Mammary epithelial cell (primary cell): ENCODE measurements at regions of chr4 and their contacts with region 1.

Region 1: GRCh38 chr4:107719922-107720722 is at the start of gene PAPSS1:
- DNase-seq: peak; percentile 98
- H3K4me3 ChIP-seq: peak within 1 kb of the TSS; percentile 70 to 96 (median 73)
- H3K27ac ChIP-seq: peak within 1 kb of the TSS; percentile 73
- H3K4me1 ChIP-seq: peaks cover 11% of the 10 kb centered on the region
- H3K27me3 ChIP-seq: no peaks in the 10 kb centered on the region
- CTCF ChIP-seq: no peak
- total RNA-seq, gene PAPSS1: 68.5 to 94.7 TPM

Region 2: DNA sequence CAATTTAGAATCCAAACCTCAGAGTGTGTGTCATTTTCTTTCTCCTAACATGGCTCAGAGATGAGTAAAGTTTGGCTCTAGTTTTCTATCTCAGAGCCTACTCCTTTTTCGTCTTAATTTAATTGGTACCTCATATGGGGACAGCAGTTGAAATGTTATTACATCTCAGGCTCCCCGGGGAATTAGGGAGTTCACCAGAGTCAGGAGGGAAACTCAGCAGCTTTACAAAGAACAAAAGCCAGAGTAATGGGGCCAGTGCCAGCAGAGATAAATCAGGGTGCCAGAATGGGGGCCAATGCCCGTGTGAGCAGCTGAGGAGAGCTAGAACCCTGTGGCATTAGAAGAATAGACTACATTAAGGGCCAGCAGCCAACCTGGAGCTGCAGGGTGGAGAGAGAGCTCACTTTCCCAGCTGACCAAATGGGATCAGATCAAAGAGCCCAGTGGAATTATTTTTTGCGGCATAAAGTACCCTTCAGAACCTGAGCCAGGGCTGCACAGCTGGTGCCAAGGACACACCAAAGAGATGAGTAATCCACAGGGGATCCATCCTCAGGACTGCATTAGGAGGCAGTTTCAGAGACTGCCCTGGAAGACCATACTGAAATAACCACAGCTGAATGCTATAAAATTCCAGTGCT is 476.9 kb before region 1 on chr4:
- CTCF ChIA-PET with region 1: no interaction called
- dilution Hi-C with region 1: no loop called
- in situ Hi-C with region 1: no loop called
- intact Hi-C with region 1: loop called (anchors 10 kb)
- DNase-seq: no peak
- H3K4me3 ChIP-seq: no peak overlapping the region
- H3K27ac ChIP-seq: no peak overlapping the region
- H3K4me1 ChIP-seq: no peaks in the 10 kb centered on the region
- H3K27me3 ChIP-seq: peaks cover 14% of the 10 kb centered on the region
- CTCF ChIP-seq: no peak

Region 3: GRCh38 chr4:107349266-107349665 is 370.9 kb before region 1 on chr4:
- CTCF ChIA-PET with region 1: no interaction called
- dilution Hi-C with region 1: no loop called
- in situ Hi-C with region 1: no loop called
- intact Hi-C with region 1: no loop called
- DNase-seq: no peak
- H3K4me3 ChIP-seq: no peak overlapping the region
- H3K27ac ChIP-seq: no peak overlapping the region
- H3K4me1 ChIP-seq: peaks cover 8% of the 10 kb centered on the region
- H3K27me3 ChIP-seq: no peaks in the 10 kb centered on the region
- CTCF ChIP-seq: no peak

Region 4: DNA sequence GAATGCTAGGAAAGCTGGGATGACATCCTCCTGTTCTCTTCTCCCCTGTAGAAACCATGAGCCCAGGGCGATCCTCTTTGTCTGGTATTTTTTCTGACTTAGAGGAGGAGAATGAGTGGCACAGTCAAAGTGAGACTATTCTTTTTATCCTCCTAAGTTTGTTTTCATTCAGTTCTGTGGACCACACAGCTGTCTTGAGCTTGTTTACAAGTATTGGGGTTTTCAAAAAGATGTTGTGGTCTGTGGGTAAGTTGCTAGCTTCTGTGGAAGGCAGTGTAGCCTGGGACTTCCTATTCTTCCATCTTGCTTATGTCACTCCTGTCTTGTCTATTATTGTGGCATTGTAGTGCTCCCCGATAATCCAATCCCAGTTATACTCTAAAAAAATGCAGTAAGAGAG is 223.1 kb before region 1 on chr4:
- CTCF ChIA-PET with region 1: no interaction called
- dilution Hi-C with region 1: no loop called
- in situ Hi-C with region 1: no loop called
- intact Hi-C with region 1: no loop called
- DNase-seq: no peak
- H3K4me3 ChIP-seq: no peak overlapping the region
- H3K27ac ChIP-seq: no peak overlapping the region
- H3K4me1 ChIP-seq: no peaks in the 10 kb centered on the region
- H3K27me3 ChIP-seq: no peaks in the 10 kb centered on the region
- CTCF ChIP-seq: no peak

Region 5: GRCh38 chr4:107689912-107690565 is 30.1 kb before region 1 on chr4:
- CTCF ChIA-PET with region 1: no interaction called
- dilution Hi-C with region 1: no loop called
- in situ Hi-C with region 1: no loop called
- intact Hi-C with region 1: loop called (anchors 2 kb)
- DNase-seq: peak; percentile 94
- H3K4me3 ChIP-seq: no peak overlapping the region
- H3K27ac ChIP-seq: peak overlapping the region; percentile 40
- H3K4me1 ChIP-seq: peaks cover 18% of the 10 kb centered on the region
- H3K27me3 ChIP-seq: no peaks in the 10 kb centered on the region
- CTCF ChIP-seq: no peak